ENCODE measurements at regions of chr12 and their contacts with region 1.

Region 1: GRCh38 chr12:4174417-4174816 is 99.1 kb upstream of the CCND2 start:
- DNase-seq: no peak
- H3K4me3 ChIP-seq: no peak overlapping the region
- H3K27ac ChIP-seq: no peak overlapping the region
- H3K4me1 ChIP-seq: no peaks in the 10 kb centered on the region
- H3K27me3 ChIP-seq: no peaks in the 10 kb centered on the region
- CTCF ChIP-seq: no peak

Region 2: DNA sequence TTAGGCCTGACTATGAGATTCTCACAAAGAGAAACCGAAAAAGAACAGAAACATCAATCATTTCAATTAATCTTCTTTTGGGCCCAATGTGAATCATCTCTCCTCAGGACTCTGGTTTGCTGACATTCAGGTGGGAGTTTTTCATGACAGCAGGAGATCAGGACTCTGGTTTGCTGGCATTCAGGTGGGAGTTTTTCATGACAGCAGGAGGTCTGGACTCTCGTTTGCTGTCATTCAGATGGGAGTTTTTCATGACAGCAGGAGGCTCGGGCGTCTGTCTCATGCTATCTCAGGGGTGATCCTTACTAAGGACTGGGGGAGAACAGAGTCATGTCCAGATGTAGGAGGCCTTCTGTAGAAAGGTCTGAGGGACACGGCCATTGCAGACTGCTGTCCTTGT is 261.1 kb before region 1 on chr12:
- intact Hi-C with region 1: no loop called
- DNase-seq: no peak
- H3K4me3 ChIP-seq: no peak overlapping the region
- H3K27ac ChIP-seq: no peak overlapping the region
- H3K4me1 ChIP-seq: no peaks in the 10 kb centered on the region
- H3K27me3 ChIP-seq: no peaks in the 10 kb centered on the region
- CTCF ChIP-seq: no peak

Region 3: DNA sequence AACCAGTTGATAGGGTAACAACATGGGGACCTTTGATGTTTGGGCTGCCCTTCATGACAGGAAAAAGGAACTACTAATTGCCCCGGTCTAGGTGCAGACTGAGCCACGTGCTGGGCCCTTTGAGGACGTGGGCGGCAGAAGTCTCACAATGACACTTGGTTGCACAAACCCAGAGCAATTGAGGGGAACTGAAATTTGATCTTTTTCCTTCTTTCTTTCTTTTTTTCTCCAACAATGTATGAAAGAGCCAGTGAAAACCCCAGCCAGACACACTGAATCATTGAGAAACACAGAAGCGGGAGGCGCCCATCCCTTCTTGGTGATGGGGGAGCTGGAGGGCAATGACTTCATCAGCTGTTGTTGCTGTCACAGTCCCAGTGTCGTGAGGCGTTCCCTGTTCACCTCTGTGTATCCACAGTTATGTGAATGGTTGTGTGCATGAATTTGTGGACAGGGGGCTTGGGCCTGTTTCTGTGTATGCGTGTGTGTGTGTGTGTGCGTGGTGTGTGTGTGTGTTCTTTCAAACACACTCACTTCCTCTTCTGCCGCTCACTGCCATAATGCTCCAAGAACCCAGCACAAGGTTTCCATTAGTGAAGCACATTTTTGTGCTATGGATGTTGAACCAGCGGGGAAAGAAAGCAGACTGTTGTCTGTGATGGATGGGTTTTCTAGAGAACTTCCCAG is 38.4 kb before region 1 on chr12:
- intact Hi-C with region 1: no loop called
- DNase-seq: peak in 1 of 2 donors; percentile 66
- H3K4me3 ChIP-seq: no peak overlapping the region
- H3K27ac ChIP-seq: no peak overlapping the region
- H3K4me1 ChIP-seq: no peaks in the 10 kb centered on the region
- H3K27me3 ChIP-seq: no peaks in the 10 kb centered on the region
- CTCF ChIP-seq: no peak

Region 4: GRCh38 chr12:4217091-4217490 is 42.7 kb after region 1 on chr12:
- intact Hi-C with region 1: loop called (anchors 1 kb)
- DNase-seq: no peak
- H3K4me3 ChIP-seq: no peak overlapping the region
- H3K27ac ChIP-seq: no peak overlapping the region
- H3K4me1 ChIP-seq: no peaks in the 10 kb centered on the region
- H3K27me3 ChIP-seq: no peaks in the 10 kb centered on the region
- CTCF ChIP-seq: no peak

Region 5: GRCh38 chr12:4230526-4230925 is 56.1 kb after region 1 on chr12:
- intact Hi-C with region 1: no loop called
- DNase-seq: no peak
- H3K4me3 ChIP-seq: no peak overlapping the region
- H3K27ac ChIP-seq: no peak overlapping the region
- H3K4me1 ChIP-seq: no peaks in the 10 kb centered on the region
- H3K27me3 ChIP-seq: no peaks in the 10 kb centered on the region
- CTCF ChIP-seq: no peak

Measured in ascending aorta (tissue), 2 donors.